ENCODE measurements at regions of chr11 and their contacts with region 1.

Region 1: DNA sequence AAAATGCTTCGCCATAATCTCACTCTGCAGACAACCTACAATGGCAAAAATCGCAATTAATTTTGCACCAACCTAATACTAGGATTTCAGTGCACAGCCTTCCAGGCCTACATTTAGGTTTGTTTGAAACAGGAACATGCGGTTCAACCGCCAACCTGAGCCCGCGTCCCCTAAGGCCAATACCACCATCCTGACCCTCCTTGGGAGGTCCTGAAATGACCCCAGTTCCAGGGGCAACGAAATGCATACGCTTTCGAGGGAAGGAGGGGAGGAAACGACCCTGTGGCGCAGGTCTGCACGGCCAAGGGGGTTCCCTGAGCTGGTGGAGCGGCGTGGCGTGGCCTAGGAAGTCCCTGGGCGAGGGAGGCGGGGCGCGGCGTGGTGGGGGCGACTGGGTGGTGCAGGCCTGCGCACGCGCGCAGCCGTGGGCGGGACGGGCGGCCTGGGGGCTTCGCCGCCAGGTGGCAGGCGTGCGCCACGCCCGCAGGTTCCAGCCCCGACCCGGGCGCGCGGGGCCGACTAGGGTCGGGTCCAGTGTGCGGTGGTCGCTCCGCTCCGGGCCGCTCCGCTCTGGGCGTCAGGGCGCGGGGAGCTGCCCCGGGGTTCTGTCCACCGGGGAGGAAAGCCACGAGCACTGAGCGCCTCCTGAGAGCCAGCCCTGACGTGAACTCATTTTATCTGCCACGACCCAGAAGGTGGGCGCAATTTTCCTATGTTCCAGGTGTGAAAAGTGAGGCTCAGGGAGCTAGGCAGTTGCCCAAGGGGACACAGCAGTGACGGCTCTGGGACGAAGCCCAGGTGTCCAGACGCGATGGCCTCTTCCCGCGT is 94.1 kb downstream of the SWAP70 start:
- DNase-seq: peak; percentile 91
- H3K4me3 Mint-ChIP-seq: peak overlapping the region; percentile 70
- H3K27ac Mint-ChIP-seq: peak overlapping the region; percentile 44
- H3K4me1 Mint-ChIP-seq: peaks cover 44% of the 10 kb centered on the region
- H3K27me3 Mint-ChIP-seq: no peaks in the 10 kb centered on the region

Region 2: DNA sequence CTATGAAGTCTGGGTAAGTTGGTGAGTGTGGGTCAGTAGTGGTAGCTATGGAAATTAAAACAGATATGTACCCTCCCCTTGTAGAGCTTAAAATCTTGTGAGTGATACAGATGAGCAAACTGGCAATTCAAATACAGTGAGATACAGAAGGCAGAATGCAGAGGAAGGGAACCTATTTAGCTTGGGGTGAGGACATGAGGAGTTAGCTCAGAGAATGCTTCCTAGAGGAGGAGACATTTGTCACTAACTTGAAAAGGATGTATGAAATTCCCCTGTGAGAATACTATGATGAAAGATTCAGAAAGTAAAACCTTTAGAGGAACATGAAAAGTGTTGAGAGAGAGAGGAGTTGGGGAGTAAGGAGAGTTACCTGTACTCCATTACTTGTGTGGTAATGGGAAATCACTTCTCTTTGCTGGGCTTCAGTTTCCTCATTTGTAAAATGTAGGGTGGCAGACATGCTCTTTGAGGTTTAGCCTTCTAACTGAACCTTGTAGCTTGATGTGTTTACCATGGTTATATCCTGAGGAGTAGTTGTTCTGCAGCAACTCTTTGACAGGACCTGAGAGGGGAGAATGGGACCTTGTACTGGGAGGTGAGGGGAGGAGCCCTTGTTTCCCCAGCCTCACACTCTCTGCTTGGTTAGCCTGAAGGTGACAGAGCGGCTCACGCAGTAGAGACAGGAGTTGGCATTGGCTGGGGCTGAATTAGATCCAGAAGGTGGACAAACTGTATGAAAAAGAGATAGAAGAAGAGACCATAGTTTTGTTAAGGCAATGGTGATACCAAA is 76.2 kb before region 1 on chr11:
- CTCF ChIA-PET with region 1: no interaction called
- POLR2A ChIA-PET with region 1: no interaction called
- DNase-seq: no peak
- H3K4me3 Mint-ChIP-seq: no peak overlapping the region
- H3K27ac Mint-ChIP-seq: no peak overlapping the region
- H3K4me1 Mint-ChIP-seq: no peaks in the 10 kb centered on the region
- H3K27me3 Mint-ChIP-seq: no peaks in the 10 kb centered on the region

Region 3: GRCh38 chr11:9708544-9708943 is 49.5 kb before region 1 on chr11:
- CTCF ChIA-PET with region 1: no interaction called
- POLR2A ChIA-PET with region 1: no interaction called
- DNase-seq: no peak
- H3K4me3 Mint-ChIP-seq: no peak overlapping the region
- H3K27ac Mint-ChIP-seq: no peak overlapping the region
- H3K4me1 Mint-ChIP-seq: peaks cover under 1% of the 10 kb centered on the region
- H3K27me3 Mint-ChIP-seq: no peaks in the 10 kb centered on the region

Region 4: DNA sequence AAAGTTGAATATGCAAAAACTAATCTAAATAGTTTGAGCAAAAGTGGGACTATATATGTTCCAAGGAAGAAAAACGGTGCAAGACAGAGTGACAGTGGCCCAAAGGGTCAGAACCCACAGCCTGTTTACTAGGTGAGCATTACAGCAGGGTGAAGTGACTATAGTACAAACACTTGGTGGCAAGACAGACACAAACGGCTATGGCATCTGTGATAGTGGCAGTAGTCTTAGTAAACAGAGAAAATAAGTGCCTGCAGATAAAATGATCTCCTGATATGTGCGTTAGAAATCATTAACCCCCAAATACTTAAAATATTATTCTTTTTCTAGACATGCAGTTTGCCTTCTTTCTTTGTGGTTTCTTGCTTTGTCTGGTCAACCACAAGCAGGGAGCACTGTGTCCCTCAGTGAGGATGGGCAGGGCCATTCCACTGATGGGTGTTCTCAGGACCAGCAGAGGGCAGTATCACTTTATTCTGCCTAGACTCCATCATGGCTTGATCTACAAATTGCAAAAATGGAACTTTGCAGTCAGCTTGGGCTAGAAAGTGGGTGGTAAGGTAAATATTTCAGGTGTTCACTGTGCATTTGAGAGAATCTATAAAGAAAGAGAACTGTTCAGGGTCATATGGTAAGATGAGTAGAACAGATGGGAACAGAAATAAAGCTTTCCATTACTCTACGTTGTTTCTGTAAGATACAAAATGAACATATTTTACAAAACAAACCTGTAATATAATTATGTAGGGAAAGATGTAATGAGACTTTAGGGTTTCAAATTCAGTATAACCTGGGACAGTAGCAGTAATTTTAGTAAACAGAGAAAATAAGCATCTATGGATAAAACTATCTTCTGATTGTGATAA is 104.1 kb after region 1 on chr11:
- CTCF ChIA-PET with region 1: interaction called, 10 read pairs
- POLR2A ChIA-PET with region 1: interaction called, 3 read pairs
- DNase-seq: peak; percentile 51
- H3K4me3 Mint-ChIP-seq: no peak overlapping the region
- H3K27ac Mint-ChIP-seq: no peak overlapping the region
- H3K4me1 Mint-ChIP-seq: peaks cover 32% of the 10 kb centered on the region
- H3K27me3 Mint-ChIP-seq: no peaks in the 10 kb centered on the region

Region 5: DNA sequence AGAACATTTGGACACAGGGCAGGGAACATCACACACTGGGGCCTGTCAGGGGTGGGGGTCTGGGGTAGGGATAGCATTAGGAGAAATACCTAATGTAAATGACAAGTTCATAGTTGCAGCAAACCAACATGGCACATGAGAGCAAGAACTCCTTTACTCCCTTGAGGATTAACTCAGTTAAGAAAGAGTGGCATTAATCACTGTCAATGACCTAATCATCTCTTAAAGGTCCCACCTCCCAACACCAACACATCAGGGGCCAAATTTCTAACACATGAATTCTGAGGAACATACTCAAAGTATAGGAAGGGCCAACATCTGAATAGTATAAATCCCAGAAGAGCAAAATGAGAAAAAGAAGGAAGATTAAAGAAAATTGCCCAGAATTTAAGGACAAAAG is 178.7 kb after region 1 on chr11:
- CTCF ChIA-PET with region 1: no interaction called
- POLR2A ChIA-PET with region 1: no interaction called
- DNase-seq: no peak
- H3K4me3 Mint-ChIP-seq: no peak overlapping the region
- H3K27ac Mint-ChIP-seq: no peak overlapping the region
- H3K4me1 Mint-ChIP-seq: no peaks in the 10 kb centered on the region
- H3K27me3 Mint-ChIP-seq: no peaks in the 10 kb centered on the region

Region 6: GRCh38 chr11:9972989-9973388 is 215.0 kb after region 1 on chr11:
- CTCF ChIA-PET with region 1: interaction called, 45 read pairs
- POLR2A ChIA-PET with region 1: interaction called, 6 read pairs
- DNase-seq: peak; percentile 31
- H3K4me3 Mint-ChIP-seq: no peak overlapping the region
- H3K27ac Mint-ChIP-seq: no peak overlapping the region
- H3K4me1 Mint-ChIP-seq: peaks cover 3% of the 10 kb centered on the region
- H3K27me3 Mint-ChIP-seq: no peaks in the 10 kb centered on the region

Region 7: GRCh38 chr11:10076458-10077141 is 318.6 kb after region 1 on chr11:
- CTCF ChIA-PET with region 1: interaction called, 23 read pairs
- POLR2A ChIA-PET with region 1: interaction called, 3 read pairs
- DNase-seq: peak; percentile 39
- H3K4me3 Mint-ChIP-seq: no peak overlapping the region
- H3K27ac Mint-ChIP-seq: no peak overlapping the region
- H3K4me1 Mint-ChIP-seq: no peaks in the 10 kb centered on the region
- H3K27me3 Mint-ChIP-seq: no peaks in the 10 kb centered on the region